ENCODE measurements at regions of chr18 and their contacts with region 1.

Region 1: GRCh38 chr18:50281295-50281971 is at the start of gene MBD1:
- DNase-seq: peak; percentile 99
- total RNA-seq, gene MBD1: 54.4 TPM

Region 2: DNA sequence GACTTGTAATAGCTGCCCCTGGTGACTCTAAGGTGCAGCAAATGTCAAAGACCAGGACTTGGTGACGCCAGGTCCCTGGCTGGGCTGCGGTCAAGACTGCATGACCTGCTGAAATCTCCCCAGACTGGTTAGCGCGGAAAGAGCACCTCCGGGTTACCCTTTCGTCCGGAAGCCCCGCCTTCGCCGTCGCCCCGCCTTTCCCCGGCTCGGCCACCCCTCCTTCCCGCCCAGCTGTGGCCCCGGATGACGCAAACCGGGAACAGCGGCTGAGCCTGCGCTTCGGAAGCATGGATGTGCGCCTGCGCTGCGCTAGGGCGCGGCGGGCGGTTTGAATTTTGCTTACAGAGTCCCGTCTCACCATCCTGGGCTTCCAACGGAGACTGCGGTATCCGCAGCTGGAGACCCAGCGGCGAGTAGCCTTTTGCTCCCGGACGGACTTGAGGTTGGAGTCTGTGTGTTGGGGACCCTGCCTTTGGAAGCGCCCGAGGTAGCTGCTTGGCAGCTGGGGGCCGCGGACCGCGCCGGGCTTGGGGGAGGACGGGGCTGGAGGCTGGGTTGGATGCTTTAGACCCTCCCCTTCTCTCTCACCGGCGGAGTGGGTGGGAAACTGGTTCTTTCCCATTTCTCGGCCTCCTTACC is 93.4 kb after region 1 on chr18 and contains the start of gene SKA1:
- intact Hi-C with region 1: loop called (anchors 2 kb)
- DNase-seq: peak; percentile 98
- total RNA-seq, gene SKA1: 0.13 TPM

Region 3: DNA sequence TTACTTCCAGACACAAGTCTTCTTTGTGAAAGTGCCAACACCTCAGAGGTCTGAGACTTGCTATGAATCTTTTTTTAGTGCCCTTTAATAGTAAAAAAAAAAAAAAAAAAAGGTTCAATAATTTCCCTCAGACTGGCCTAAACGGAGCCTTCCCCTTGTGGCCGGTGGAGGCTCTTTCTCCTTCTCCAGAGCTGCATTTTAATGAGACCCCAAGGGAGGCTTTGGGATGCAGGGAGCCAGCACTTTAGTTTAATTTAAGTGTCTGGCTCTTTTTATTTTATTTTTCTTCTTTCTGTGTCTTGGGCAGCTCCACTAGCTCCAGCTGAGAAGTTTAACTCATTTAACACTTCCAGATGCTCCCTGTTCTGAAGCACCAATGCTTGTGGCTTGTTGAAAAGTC is 210.7 kb after region 1 on chr18:
- intact Hi-C with region 1: no loop called
- DNase-seq: no peak